Activated naive CD4-positive, alpha-beta T cell treated with anti-CD3 and anti-CD28 coated beads for 36 hours (primary cell): ENCODE measurements at regions of chr16 and their contacts with region 1.

Region 1: GRCh38 chr16:55944377-55944802 is 69.2 kb upstream of the CES5A start:
- DNase-seq: peak; percentile 62
- H3K4me3 Mint-ChIP-seq: no peak overlapping the region
- H3K27ac Mint-ChIP-seq: no peak overlapping the region
- H3K4me1 Mint-ChIP-seq: no peaks in the 10 kb centered on the region
- H3K27me3 Mint-ChIP-seq: peaks cover 29% of the 10 kb centered on the region

Region 2: GRCh38 chr16:55955845-55956244 is 11.5 kb after region 1 on chr16:
- CTCF ChIA-PET with region 1: interaction called, 11 read pairs
- intact Hi-C with region 1: no loop called
- DNase-seq: no peak
- H3K4me3 Mint-ChIP-seq: no peak overlapping the region
- H3K27ac Mint-ChIP-seq: no peak overlapping the region
- H3K4me1 Mint-ChIP-seq: no peaks in the 10 kb centered on the region
- H3K27me3 Mint-ChIP-seq: peaks cover 8% of the 10 kb centered on the region

Region 3: GRCh38 chr16:56708525-56709442 is 764.4 kb after region 1 on chr16:
- CTCF ChIA-PET with region 1: no interaction called
- intact Hi-C with region 1: loop called (anchors 10 kb)
- DNase-seq: peak; percentile 38
- H3K4me3 Mint-ChIP-seq: peak overlapping the region; percentile 6
- H3K27ac Mint-ChIP-seq: peak overlapping the region; percentile 14
- H3K4me1 Mint-ChIP-seq: peaks cover 20% of the 10 kb centered on the region
- H3K27me3 Mint-ChIP-seq: no peaks in the 10 kb centered on the region